HCT116 (cell line): ENCODE measurements at regions of chr19 and their contacts with region 1.

Region 1: DNA sequence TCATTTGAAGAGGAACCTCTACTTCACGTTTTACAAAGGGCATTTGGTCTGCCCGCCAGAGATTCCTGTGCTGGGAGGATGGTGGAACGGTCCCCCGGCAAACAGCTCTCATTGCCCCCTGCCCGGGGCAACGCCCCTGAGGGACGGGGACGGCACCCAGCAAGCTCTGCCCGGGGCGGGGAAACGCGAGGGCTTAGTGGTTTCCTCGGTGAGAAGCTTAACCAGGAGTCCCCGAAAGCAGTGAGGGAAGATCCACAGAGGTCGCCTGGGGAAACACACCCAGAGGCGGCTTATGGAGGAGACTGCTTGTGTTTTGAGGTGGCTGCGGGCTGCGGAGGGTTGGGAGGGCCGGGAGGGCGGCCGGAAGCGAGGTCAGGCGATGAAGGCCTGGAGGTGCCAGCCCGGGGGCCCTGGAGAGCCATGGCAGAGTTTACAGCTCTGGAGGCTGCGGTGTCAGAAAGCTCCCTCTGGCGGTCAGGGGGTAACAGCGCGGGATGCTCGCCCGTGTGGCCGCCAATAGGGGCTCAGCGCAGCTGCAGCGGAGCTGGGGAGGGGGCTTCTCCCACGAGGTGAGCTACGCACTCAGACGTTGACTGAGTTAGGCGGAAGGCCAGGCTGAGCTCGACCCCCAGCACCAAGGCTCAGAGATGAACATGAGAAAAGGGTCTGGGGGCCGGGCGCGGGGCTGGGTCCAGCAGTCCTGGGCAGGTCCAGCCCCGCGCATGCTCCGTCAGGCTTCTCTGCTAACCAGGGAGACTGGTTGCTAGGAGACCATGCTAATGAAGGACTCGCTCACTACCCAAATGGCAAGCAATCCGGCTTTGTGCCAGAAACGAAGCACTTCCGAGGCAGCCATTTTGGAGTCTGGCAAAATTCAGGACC is 652 bp upstream of the TPGS1 start:
- DNase-seq: peak; percentile 99
- ATAC-seq: peak; percentile 77
- H3K4me3 ChIP-seq: peak overlapping the region; percentile 89 to 97
- H3K27ac ChIP-seq: peak overlapping the region; percentile 91
- H3K4me1 ChIP-seq: peaks cover 19 to 40% of the 10 kb centered on the region in 2 experiments
- H3K27me3 ChIP-seq: no peaks in the 10 kb centered on the region
- CTCF ChIP-seq: peak; percentile 92 to 98 (median 93)
- POLR2A ChIP-seq: peak; percentile 45
- RAD21 ChIP-seq: peak; percentile 74

Region 2: DNA sequence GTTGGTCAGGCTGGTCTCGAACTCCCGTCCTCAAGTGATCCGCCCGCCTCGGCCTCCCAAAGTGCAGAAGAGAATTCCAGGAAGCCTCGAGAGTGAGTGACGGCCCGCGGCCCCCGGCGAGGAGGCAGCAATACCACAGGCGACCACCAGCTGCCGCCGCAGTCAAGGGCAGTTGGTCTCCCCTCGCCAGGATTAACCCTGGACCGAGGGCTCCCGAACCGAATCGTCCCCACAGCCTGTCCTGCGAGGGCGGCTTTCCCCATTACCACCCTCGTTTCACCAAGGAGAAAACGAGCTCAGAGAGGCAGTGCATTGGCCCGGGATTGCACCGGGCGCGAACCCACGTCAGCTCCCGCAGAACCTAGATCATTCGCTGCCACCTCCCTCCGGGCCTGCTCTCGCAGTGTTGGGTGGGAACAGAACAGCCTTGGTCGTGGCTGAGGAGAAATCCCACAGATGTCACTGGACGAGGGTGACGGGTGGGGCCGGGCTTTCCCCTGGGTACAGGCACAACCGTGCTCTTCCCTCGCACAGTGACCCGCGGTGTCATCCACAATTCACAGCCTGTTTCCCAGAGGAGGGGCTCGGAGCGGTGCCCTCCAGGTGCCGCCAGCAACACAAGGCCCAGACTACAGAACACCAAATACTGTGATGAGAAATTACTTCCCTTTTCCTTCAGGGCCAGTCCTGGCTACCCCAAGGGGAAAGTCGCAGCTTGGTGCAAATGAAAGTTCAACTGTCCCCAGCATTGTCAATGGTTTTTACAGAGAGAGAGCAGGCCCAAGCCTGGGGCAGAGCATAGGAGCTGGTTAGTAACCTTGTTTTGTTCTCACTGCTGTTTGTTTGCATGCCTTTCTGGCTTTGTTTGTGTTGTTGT is 122.5 kb before region 1 on chr19:
- CTCF ChIA-PET with region 1: no interaction called
- POLR2A ChIA-PET with region 1: no interaction called
- RAD21 ChIA-PET with region 1: no interaction called
- intact Hi-C with region 1: loop called (anchors 10 kb)
- DNase-seq: no peak
- ATAC-seq: no peak
- H3K4me3 ChIP-seq: no peak overlapping the region
- H3K27ac ChIP-seq: no peak overlapping the region
- H3K4me1 ChIP-seq: no peaks in the 10 kb centered on the region
- H3K27me3 ChIP-seq: no peaks in the 10 kb centered on the region
- CTCF ChIP-seq: peak; percentile 13 to 25 (median 15); a peak in 1 of 6 replicates
- POLR2A ChIP-seq: no peak
- RAD21 ChIP-seq: peak; percentile 45

Region 3: DNA sequence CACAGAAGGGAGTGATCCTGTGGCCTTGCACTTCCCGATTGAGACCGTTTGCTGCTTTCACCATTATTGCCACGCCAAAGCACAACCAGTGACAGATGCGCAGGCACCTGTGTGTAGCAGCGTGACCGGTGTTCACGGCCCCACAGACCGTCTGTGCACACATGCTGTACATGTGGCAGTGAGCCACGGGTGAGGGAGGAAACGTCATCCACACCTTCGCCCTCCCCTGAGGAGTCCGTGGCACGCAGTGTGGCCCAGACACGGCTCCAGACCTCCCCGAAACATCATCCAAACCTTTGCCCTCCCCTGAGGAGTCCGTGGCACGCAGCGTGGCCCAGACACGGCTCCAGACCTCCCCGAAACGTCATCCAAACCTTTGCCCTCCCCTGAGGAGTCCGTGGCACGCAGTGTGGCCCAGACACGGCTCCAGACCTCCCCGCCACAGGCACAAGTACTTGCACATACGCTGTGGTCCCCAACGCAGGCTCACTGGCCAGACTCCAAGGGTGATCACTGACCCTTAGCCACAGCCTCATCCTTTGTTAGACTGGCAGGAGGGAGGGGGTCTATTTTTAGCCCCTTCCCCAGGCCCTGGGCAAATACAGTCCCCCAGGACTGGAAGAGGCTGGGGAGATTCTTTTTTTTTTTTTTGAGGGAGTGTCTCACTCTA is 37.9 kb before region 1 on chr19:
- CTCF ChIA-PET with region 1: no interaction called
- POLR2A ChIA-PET with region 1: no interaction called
- RAD21 ChIA-PET with region 1: no interaction called
- intact Hi-C with region 1: no loop called
- DNase-seq: no peak
- ATAC-seq: no peak
- H3K4me3 ChIP-seq: no peak overlapping the region
- H3K27ac ChIP-seq: no peak overlapping the region
- H3K4me1 ChIP-seq: peaks cover 0 to 5% of the 10 kb centered on the region in 2 experiments; a peak in 1 of 4 replicates
- H3K27me3 ChIP-seq: no peaks in the 10 kb centered on the region
- CTCF ChIP-seq: no peak
- POLR2A ChIP-seq: no peak
- RAD21 ChIP-seq: no peak

Region 4: GRCh38 chr19:495402-496186 is 11.1 kb before region 1 on chr19:
- CTCF ChIA-PET with region 1: interaction called, 29 read pairs
- POLR2A ChIA-PET with region 1: interaction called, 5 read pairs
- RAD21 ChIA-PET with region 1: no interaction called
- intact Hi-C with region 1: no loop called
- DNase-seq: no peak
- ATAC-seq: peak; percentile 79
- H3K4me3 ChIP-seq: no peak overlapping the region
- H3K27ac ChIP-seq: peak overlapping the region; percentile 22; the same call in 1 of the 2 replicates
- H3K4me1 ChIP-seq: peaks cover 2 to 10% of the 10 kb centered on the region in 2 experiments; a peak in 3 of 4 replicates
- H3K27me3 ChIP-seq: no peaks in the 10 kb centered on the region
- CTCF ChIP-seq: peak; percentile 59 to 92 (median 79); a peak in 5 of 6 replicates
- POLR2A ChIP-seq: no peak
- RAD21 ChIP-seq: no peak; the same call in none of the 2 replicates

Region 5: DNA sequence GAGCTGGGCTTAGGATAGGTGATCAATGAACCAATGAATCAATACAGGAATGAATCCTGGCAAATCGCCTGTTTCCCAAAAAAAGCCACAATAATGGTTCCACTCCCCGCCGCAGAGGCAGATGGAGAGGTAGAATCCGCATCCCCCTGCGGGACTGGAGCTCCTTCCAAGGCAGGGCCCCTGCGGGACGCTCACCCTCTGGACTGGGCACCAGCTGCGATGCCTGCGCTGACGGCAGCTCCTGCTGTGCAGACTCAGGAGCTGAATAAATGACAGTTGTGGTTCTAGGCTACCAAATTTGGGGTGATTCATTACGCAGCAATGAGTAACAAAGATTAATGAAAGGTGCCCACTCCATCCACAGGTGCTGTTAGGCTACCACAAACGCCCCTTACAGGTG is 16.1 kb after region 1 on chr19:
- CTCF ChIA-PET with region 1: interaction called, 28 read pairs
- POLR2A ChIA-PET with region 1: interaction called, 4 read pairs
- RAD21 ChIA-PET with region 1: no interaction called
- intact Hi-C with region 1: no loop called
- DNase-seq: no peak
- ATAC-seq: no peak
- H3K4me3 ChIP-seq: no peak overlapping the region
- H3K27ac ChIP-seq: no peak overlapping the region
- H3K4me1 ChIP-seq: no peaks in the 10 kb centered on the region
- H3K27me3 ChIP-seq: no peaks in the 10 kb centered on the region
- CTCF ChIP-seq: no peak
- POLR2A ChIP-seq: no peak
- RAD21 ChIP-seq: no peak

Region 6: GRCh38 chr19:531009-531752 is 24.5 kb after region 1 on chr19:
- CTCF ChIA-PET with region 1: interaction called, 23 read pairs
- POLR2A ChIA-PET with region 1: interaction called, 10 read pairs
- RAD21 ChIA-PET with region 1: interaction called in 1 of 2 experiments, 5 read pairs
- intact Hi-C with region 1: no loop called
- DNase-seq: peak; percentile 54
- ATAC-seq: peak; percentile 79
- H3K4me3 ChIP-seq: peak overlapping the region; percentile 74 to 86
- H3K27ac ChIP-seq: peak overlapping the region; percentile 96
- H3K4me1 ChIP-seq: peaks cover 23 to 45% of the 10 kb centered on the region in 2 experiments
- H3K27me3 ChIP-seq: no peaks in the 10 kb centered on the region
- CTCF ChIP-seq: no peak
- POLR2A ChIP-seq: peak; percentile 14
- RAD21 ChIP-seq: no peak

Region 7: GRCh38 chr19:556611-557382 is 50.2 kb after region 1 on chr19:
- CTCF ChIA-PET with region 1: interaction called, 12 read pairs
- POLR2A ChIA-PET with region 1: interaction called, 3 read pairs
- RAD21 ChIA-PET with region 1: no interaction called
- intact Hi-C with region 1: no loop called
- DNase-seq: no peak
- ATAC-seq: no peak
- H3K4me3 ChIP-seq: peak overlapping the region in 1 of 2 experiments; percentile 8; a peak in 1 of 4 replicates
- H3K27ac ChIP-seq: peak overlapping the region; percentile 48; the same call in 1 of the 2 replicates
- H3K4me1 ChIP-seq: peaks cover 17 to 18% of the 10 kb centered on the region in 2 experiments
- H3K27me3 ChIP-seq: no peaks in the 10 kb centered on the region
- CTCF ChIP-seq: no peak
- POLR2A ChIP-seq: no peak
- RAD21 ChIP-seq: no peak